Mammary epithelial cell (primary cell): ENCODE measurements at regions of chr4 and their contacts with region 1.

Region 1: GRCh38 chr4:159446266-159446976 is 343.5 kb downstream of the RAPGEF2 start:
- DNase-seq: peak; percentile 68
- H3K4me3 ChIP-seq: no peak overlapping the region
- H3K27ac ChIP-seq: no peak overlapping the region
- H3K4me1 ChIP-seq: peaks cover 17% of the 10 kb centered on the region
- H3K27me3 ChIP-seq: no peaks in the 10 kb centered on the region
- CTCF ChIP-seq: peak; percentile 91

Region 2: DNA sequence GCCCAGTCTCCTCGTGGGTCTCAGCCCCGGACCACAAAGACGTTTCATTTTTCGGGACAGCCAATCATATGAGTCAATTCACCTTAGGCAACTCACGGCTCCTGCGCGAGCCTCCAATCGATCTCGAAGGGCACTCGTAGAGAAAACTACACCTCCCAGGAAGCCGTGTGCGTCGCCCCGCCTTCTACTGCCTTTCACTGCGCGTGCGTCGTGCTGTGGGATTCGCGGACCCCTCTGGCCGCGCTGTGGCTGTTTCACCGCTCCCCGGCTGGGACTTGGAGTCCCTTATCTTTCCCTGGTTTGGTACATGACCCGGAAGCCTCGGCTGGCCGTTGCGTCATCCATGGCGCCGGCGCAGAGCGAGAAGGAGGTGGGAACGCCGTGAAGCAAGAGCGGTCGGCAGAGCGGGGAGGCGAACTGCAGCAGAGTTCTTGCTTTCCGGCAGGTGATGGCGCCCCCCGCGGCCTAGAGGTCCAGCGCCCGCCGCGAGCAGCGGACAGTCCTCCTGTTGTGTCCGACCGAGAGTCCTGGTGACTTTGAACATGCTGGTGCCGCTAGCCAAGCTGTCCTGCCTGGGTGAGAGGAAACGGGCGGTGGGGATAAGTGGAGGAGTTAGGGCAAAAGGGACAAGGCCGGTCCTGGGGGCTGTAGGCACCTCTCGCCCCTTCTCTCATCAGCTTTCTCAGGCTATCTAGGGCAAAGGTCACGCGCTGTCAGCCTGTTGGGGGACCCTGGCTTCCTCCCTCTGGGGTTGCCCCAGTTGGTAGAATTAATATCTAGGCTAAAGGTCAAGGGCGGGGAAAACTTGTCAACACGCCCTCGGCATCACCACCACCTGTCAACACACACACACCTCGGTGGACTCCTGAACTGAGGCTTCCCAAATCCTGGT is 774.3 kb before region 1 on chr4 and contains the start of gene ETFDH:
- CTCF ChIA-PET with region 1: no interaction called
- dilution Hi-C with region 1: no loop called
- in situ Hi-C with region 1: no loop called
- intact Hi-C with region 1: loop called (anchors 5 kb)
- DNase-seq: peak; percentile 100
- H3K4me3 ChIP-seq: peak within 1 kb of the TSS; percentile 70 to 90 (median 76)
- H3K27ac ChIP-seq: peak within 1 kb of the TSS; percentile 82
- H3K4me1 ChIP-seq: peaks cover 14% of the 10 kb centered on the region
- H3K27me3 ChIP-seq: no peaks in the 10 kb centered on the region
- CTCF ChIP-seq: peak; percentile 43 to 66
- total RNA-seq, gene ETFDH: 18.1 to 22.8 TPM

Region 3: DNA sequence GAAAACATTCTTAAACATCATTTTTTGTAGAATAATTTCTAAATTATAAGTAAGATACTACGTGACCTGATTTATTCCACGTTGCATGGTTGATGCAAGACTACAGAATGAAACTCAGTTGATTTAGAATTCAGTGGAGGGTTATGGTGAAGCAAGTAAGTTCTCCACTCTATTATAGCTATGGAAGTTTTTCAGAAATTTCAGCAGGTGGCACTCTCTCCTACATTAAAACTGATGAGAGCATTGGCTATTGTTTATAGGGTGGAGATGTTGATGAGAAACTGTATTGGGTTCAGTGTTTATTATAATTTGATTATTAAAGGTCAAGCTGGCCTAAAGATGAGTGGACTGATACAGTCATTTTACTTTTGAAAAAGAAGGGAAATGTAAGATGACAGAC is 589.6 kb before region 1 on chr4:
- CTCF ChIA-PET with region 1: no interaction called
- dilution Hi-C with region 1: no loop called
- in situ Hi-C with region 1: loop called (anchors 10 to 25 kb)
- intact Hi-C with region 1: loop called (anchors 1 kb)
- DNase-seq: peak; percentile 25
- H3K4me3 ChIP-seq: no peak overlapping the region
- H3K27ac ChIP-seq: no peak overlapping the region
- H3K4me1 ChIP-seq: no peaks in the 10 kb centered on the region
- H3K27me3 ChIP-seq: no peaks in the 10 kb centered on the region
- CTCF ChIP-seq: peak; percentile 44 to 63

Region 4: GRCh38 chr4:158996669-158997074 is 449.7 kb before region 1 on chr4:
- CTCF ChIA-PET with region 1: no interaction called
- dilution Hi-C with region 1: no loop called
- in situ Hi-C with region 1: no loop called
- intact Hi-C with region 1: no loop called
- DNase-seq: peak; percentile 99
- H3K4me3 ChIP-seq: no peak overlapping the region
- H3K27ac ChIP-seq: peak overlapping the region; percentile 82
- H3K4me1 ChIP-seq: peaks cover 22% of the 10 kb centered on the region
- H3K27me3 ChIP-seq: no peaks in the 10 kb centered on the region
- CTCF ChIP-seq: no peak

Region 5: GRCh38 chr4:159102622-159103383 is 343.6 kb before region 1 on chr4 and contains the start of gene RAPGEF2:
- CTCF ChIA-PET with region 1: interaction called, 9 read pairs
- dilution Hi-C with region 1: no loop called
- in situ Hi-C with region 1: no loop called
- intact Hi-C with region 1: loop called (anchors 10 kb)
- DNase-seq: peak; percentile 95
- H3K4me3 ChIP-seq: peak within 1 kb of the TSS; percentile 67 to 93 (median 87)
- H3K27ac ChIP-seq: peak within 1 kb of the TSS; percentile 92
- H3K4me1 ChIP-seq: peaks cover 19% of the 10 kb centered on the region
- H3K27me3 ChIP-seq: no peaks in the 10 kb centered on the region
- CTCF ChIP-seq: peak in 1 of 2 donors; percentile 2
- total RNA-seq, gene RAPGEF2: 23.4 to 47.2 TPM

Region 6: GRCh38 chr4:159201168-159201567 is 245.3 kb before region 1 on chr4:
- CTCF ChIA-PET with region 1: interaction called, 4 read pairs
- dilution Hi-C with region 1: no loop called
- in situ Hi-C with region 1: loop called (anchors 5 to 10 kb)
- intact Hi-C with region 1: loop called (anchors 1 kb)
- DNase-seq: no peak
- H3K4me3 ChIP-seq: no peak overlapping the region
- H3K27ac ChIP-seq: no peak overlapping the region
- H3K4me1 ChIP-seq: peaks cover 2% of the 10 kb centered on the region
- H3K27me3 ChIP-seq: no peaks in the 10 kb centered on the region
- CTCF ChIP-seq: no peak

Region 7: DNA sequence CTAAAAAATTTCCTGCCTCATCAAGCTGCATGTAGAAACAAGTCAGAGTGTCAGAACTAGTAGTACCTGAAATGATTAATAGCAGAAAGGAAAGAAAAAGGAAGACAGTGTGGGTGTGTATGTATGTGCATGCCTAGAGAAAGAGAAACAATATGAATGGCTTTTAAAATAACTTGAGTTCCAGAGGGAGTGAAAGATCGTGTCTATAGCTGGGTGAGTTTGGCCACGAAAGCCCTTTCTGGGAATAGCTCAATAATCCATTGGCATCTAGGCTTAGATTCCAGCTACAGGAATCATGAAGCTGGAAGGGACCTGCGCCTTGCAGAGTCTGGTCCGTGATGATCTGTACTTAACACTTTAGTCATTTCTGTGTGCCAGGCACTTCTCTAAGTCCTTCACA is 147.9 kb before region 1 on chr4:
- CTCF ChIA-PET with region 1: no interaction called
- dilution Hi-C with region 1: no loop called
- in situ Hi-C with region 1: no loop called
- intact Hi-C with region 1: loop called (anchors 10 kb)
- DNase-seq: peak; percentile 84
- H3K4me3 ChIP-seq: peak overlapping the region; percentile 46 to 79 (median 72)
- H3K27ac ChIP-seq: peak overlapping the region; percentile 81
- H3K4me1 ChIP-seq: peaks cover 38% of the 10 kb centered on the region
- H3K27me3 ChIP-seq: no peaks in the 10 kb centered on the region
- CTCF ChIP-seq: no peak

Region 8: DNA sequence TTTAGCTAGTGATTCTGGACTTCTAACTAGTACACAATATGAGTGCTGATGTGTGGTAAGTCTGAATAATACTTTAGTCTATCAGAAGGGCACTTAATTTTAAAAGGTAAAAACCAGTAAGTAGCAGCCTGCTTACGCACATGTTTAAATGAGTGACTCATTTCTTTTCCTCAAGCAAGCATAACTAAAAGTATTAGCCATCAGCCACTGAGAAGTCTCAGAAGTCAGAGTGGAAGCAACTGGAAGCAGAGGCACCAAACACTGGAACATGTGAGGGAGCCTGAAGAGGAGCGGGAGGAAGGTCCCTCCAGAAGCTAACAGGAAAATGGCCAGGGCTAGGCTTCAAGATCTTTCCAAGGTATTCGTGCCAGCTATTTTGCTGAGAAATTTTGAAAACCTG is 85.9 kb before region 1 on chr4:
- CTCF ChIA-PET with region 1: no interaction called
- dilution Hi-C with region 1: no loop called
- in situ Hi-C with region 1: no loop called
- intact Hi-C with region 1: loop called (anchors 2 kb)
- DNase-seq: peak; percentile 76
- H3K4me3 ChIP-seq: no peak overlapping the region
- H3K27ac ChIP-seq: no peak overlapping the region
- H3K4me1 ChIP-seq: peaks cover 28% of the 10 kb centered on the region
- H3K27me3 ChIP-seq: no peaks in the 10 kb centered on the region
- CTCF ChIP-seq: no peak